HepG2 (cell line): ENCODE measurements at regions of chr11 and their contacts with region 1.

Region 1: DNA sequence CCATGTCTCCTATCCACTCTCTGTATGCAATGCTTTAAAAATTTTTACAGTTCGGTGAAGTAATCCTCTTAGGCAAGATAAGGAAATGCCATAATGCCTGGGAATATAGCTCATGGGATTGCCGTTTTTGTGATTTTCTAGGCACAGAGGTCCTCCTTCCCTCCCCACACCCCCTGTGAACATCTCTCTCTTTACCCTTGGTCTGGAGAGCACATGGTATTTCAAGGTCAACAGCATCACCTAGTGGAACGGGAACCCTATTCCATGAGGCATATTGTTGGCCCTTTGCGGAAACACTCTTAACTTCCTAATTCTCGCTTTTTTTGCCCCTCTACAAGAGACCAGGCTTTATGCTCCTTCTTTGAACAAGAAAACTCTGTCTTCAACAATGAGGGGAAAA is 8.8 kb downstream of the NXPE4 start:
- DNase-seq: no peak
- ATAC-seq: no peak
- H3K4me3 ChIP-seq: no peak overlapping the region
- H3K27ac ChIP-seq: no peak overlapping the region
- H3K4me1 ChIP-seq: no peaks in the 10 kb centered on the region
- H3K27me3 ChIP-seq: no peaks in the 10 kb centered on the region
- CTCF ChIP-seq: peak; percentile 47
- EP300 ChIP-seq: no peak
- POLR2A ChIP-seq: no peak
- RAD21 ChIP-seq: no peak

Region 2: GRCh38 chr11:114340311-114341131 is 246.3 kb before region 1 on chr11:
- CTCF ChIA-PET with region 1: no interaction called
- POLR2A ChIA-PET with region 1: no interaction called
- in situ Hi-C with region 1: loop called (anchors 25 kb)
- intact Hi-C with region 1: no loop called
- DNase-seq: peak; percentile 30
- ATAC-seq: peak; percentile 71
- H3K4me3 ChIP-seq: no peak overlapping the region
- H3K27ac ChIP-seq: no peak overlapping the region
- H3K4me1 ChIP-seq: no peaks in the 10 kb centered on the region
- H3K27me3 ChIP-seq: 0 out of 5 replicates have a peak, but pooled peaks cover 0 to 5% of the 10 kb centered on the region in 2 experiments
- CTCF ChIP-seq: peak; percentile 81
- EP300 ChIP-seq: no peak
- POLR2A ChIP-seq: no peak
- RAD21 ChIP-seq: peak; percentile 49